Naive thymus-derived CD8-positive, alpha-beta T cell (primary cell): ENCODE measurements at regions of chr6 and their contacts with region 1.

Region 1: GRCh38 chr6:31652925-31653718 is 661 bp upstream of the BAG6 start:
- DNase-seq: peak in 5 of 10 donors; percentile 65 to 94 (median 87)
- ATAC-seq: peak; percentile 74 to 75
- H3K4me3 Mint-ChIP-seq: peak overlapping the region; percentile 88 to 99 (median 95)
- H3K27ac Mint-ChIP-seq: peak overlapping the region; percentile 97 to 100 (median 100)
- H3K4me1 Mint-ChIP-seq: peaks cover 25 to 70% (median 67%) of the 10 kb centered on the region in 4 donors
- H3K27me3 Mint-ChIP-seq: peaks cover 0 to 2% (median 0%) of the 10 kb centered on the region in 5 donors

Region 2: GRCh38 chr6:31619805-31620585 is 33.1 kb before region 1 on chr6:
- POLR2A ChIA-PET with region 1: interaction called, 49 read pairs
- DNase-seq: peak; percentile 88 to 97 (median 96)
- ATAC-seq: peak; percentile 83
- H3K4me3 Mint-ChIP-seq: peak overlapping the region; percentile 77 to 99 (median 94)
- H3K27ac Mint-ChIP-seq: peak overlapping the region; percentile 95 to 100 (median 98)
- H3K4me1 Mint-ChIP-seq: peaks cover 31 to 60% (median 46%) of the 10 kb centered on the region in 4 donors
- H3K27me3 Mint-ChIP-seq: no peaks in the 10 kb centered on the region

Region 3: GRCh38 chr6:31636698-31637596 is 16.2 kb before region 1 on chr6:
- POLR2A ChIA-PET with region 1: interaction called, 21 read pairs
- DNase-seq: no peak
- ATAC-seq: no peak
- H3K4me3 Mint-ChIP-seq: no peak overlapping the region
- H3K27ac Mint-ChIP-seq: peak overlapping the region in 4 of 10 donors; percentile 38 to 86 (median 54)
- H3K4me1 Mint-ChIP-seq: peaks cover 0 to 15% (median 5%) of the 10 kb centered on the region in 4 donors
- H3K27me3 Mint-ChIP-seq: no peaks in the 10 kb centered on the region

Region 4: DNA sequence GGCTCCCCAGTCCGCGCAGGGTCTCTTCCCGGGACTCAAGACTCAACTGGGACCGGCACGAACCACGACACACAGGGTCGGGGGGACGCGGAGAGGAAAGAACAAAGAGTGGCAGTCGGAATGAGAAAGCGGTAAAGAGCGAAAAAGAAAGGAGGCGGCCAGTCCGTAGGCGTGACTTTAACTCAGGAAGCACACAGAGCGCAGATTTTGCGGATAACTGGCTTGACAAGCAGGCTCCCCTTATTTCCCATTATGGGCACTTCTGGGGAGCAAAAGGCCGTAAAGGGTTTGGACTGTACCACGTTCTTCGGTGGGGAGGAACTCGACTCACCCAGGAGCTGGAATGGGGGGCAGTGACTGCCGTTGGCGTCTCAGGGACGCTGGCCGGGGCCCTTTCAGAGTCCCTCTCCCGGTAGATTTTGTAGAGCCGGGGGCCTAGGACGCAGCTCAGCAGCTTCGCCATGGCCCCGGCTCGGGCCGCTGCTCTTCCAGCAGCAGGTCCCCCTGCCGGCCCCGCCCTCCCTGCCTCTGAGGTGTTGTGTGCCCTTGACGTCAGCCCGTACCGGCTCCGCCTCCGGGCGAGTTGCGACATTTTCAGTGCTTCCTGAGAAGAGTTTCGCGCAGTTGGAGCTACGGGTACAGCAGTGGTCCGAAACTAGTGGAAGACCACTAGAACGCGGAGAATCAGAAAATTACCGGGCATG is 49.8 kb after region 1 on chr6 and contains the start of gene ABHD16A:
- POLR2A ChIA-PET with region 1: interaction called, 22 read pairs
- DNase-seq: peak; percentile 93 to 99 (median 96)
- ATAC-seq: peak; percentile 93 to 94
- H3K4me3 Mint-ChIP-seq: peak within 1 kb of the TSS; percentile 95 to 100 (median 98)
- H3K27ac Mint-ChIP-seq: peak within 1 kb of the TSS; percentile 91 to 99 (median 96)
- H3K4me1 Mint-ChIP-seq: peaks cover 17 to 43% (median 33%) of the 10 kb centered on the region in 4 donors
- H3K27me3 Mint-ChIP-seq: no peaks in the 10 kb centered on the region
- polyA plus RNA-seq, gene ABHD16A: 26.9 to 35.5 (median 34.1) TPM

Region 5: DNA sequence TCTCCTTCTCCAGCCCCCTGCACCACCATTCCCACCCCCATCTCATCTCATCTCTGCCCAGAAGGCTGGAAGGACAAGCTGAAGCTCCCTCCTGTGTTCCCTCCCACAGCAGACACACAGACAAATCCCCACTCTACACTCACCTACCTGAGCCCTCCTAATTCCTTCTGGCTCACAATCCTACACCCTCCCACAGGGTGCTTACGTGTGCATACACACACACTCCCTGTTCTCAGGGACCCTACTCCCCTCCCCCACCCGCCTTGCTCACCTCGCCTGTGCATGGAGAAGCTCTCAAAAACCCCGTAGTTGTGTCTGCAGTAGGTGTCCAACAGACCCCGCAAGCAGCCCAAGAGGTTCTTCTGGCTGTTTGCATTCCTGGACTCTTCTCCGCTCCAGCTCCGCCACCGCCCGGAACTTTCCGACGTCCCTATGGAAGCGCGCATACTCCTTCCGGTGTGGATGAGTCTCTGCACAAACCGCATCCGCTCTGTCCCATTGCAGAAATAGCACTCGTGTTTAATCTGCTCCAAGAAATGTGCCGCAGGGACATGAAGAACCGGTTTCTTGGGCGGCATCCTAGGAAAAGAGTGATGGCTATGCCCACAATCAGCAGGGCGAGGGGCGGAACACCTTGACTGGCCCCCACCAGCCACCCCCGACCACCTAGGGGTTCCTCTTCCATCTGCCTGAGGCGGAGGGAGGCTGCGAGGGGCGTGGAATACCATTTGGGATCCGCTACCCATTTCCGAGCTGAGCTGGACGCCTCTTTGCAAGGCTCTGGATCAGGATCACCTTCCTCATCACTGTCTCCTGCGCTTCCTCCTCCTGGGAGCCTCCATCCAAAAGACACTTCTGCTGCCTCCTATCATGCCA is 806.7 kb after region 1 on chr6:
- POLR2A ChIA-PET with region 1: no interaction called
- DNase-seq: no peak
- ATAC-seq: no peak
- H3K4me3 Mint-ChIP-seq: peak overlapping the region in 6 of 10 donors; percentile 0 to 69 (median 60)
- H3K27ac Mint-ChIP-seq: peak overlapping the region in 1 of 10 donors; percentile 74
- H3K4me1 Mint-ChIP-seq: peaks cover 0 to 8% (median 2%) of the 10 kb centered on the region in 4 donors
- H3K27me3 Mint-ChIP-seq: peaks cover 32 to 49% (median 45%) of the 10 kb centered on the region in 5 donors